ENCODE measurements at regions of chr6 and their contacts with region 1.

Region 1: DNA sequence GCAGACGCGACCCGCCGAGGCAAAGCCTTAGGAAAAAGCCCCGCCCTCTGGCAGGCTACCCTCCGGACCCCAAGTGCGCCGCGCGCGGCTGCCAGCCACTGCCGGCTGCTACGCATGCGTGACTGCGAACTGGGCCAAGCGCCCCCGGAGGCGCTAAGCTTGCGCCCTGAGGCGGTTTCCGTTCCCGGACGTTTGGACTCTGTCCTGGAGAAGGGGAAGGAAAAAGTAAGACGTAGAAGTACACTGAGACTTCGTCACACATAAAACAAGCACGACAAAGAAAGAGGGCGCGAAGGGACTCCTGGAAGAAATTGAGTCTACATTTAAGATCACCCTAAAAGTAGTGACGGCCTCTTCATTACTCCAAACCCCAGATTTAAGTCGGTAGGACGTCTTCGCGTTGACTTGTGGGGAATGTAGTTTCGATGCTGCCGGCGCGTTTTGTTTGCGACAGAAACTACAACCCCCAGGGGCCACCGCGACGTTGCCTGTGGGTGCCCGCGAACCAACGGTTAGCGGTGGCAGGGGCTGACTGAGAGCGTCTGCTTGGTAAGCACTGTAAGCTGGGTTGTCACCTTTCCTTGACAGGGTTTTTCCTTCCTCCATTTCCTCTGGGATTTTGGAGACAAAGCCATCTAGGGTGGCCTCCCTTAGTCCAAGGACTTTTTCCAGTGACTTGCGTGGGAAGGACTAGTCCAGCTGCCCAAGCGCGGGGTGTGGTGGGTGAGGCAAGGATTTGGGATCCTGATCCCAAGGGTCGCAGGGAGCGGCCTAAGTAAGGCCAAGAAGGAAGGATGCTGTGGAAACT is at the start of gene CEP57L1:
- DNase-seq: peak; percentile 97
- H3K4me3 Mint-ChIP-seq: peak within 1 kb of the TSS; percentile 94
- H3K27ac Mint-ChIP-seq: peak within 1 kb of the TSS; percentile 100
- H3K4me1 Mint-ChIP-seq: peaks cover 49% of the 10 kb centered on the region
- H3K27me3 Mint-ChIP-seq: no peaks in the 10 kb centered on the region
- total RNA-seq, gene CEP57L1: 21.6 to 23.3 TPM

Region 2: DNA sequence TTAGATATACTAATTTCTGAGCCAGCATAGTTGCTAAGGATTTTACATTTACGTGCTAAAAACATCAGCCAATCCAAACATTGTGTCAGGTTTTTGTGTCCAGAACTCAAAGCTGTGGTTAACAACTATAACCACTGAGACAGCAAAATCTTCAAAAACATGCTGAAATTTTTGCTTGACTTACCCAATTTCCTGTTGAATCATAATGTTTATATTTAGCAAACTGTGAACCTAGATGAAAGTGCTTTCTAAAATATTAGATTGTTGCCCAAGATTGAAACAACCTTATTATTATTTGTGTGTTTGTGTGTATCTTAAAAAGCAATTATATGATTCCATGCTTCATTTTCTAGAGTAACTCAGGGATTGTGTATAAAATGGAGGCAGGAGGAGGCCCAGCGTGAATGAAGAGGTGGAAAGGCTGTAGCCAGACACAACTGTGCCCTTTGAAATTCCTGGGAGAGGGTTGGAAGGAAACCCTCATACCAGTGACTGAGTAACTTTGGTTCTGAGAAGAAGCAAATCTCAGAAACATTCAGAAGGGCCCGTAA is 199.0 kb before region 1 on chr6:
- CTCF ChIA-PET with region 1: no interaction called
- POLR2A ChIA-PET with region 1: interaction called, 10 read pairs
- DNase-seq: no peak
- H3K4me3 Mint-ChIP-seq: peak overlapping the region; percentile 45
- H3K27ac Mint-ChIP-seq: peak overlapping the region; percentile 93
- H3K4me1 Mint-ChIP-seq: peaks cover 53% of the 10 kb centered on the region
- H3K27me3 Mint-ChIP-seq: peaks cover 1% of the 10 kb centered on the region

Region 3: GRCh38 chr6:108921547-108922361 is 173.5 kb before region 1 on chr6:
- CTCF ChIA-PET with region 1: interaction called, 4 read pairs
- POLR2A ChIA-PET with region 1: interaction called, 18 read pairs
- DNase-seq: peak; percentile 63
- H3K4me3 Mint-ChIP-seq: no peak overlapping the region
- H3K27ac Mint-ChIP-seq: peak overlapping the region; percentile 78
- H3K4me1 Mint-ChIP-seq: peaks cover 49% of the 10 kb centered on the region
- H3K27me3 Mint-ChIP-seq: peaks cover 67% of the 10 kb centered on the region

Region 4: GRCh38 chr6:109073344-109074132 is 21.7 kb before region 1 on chr6:
- CTCF ChIA-PET with region 1: interaction called, 11 read pairs
- POLR2A ChIA-PET with region 1: interaction called, 22 read pairs
- DNase-seq: peak; percentile 47
- H3K4me3 Mint-ChIP-seq: no peak overlapping the region
- H3K27ac Mint-ChIP-seq: no peak overlapping the region
- H3K4me1 Mint-ChIP-seq: peaks cover 21% of the 10 kb centered on the region
- H3K27me3 Mint-ChIP-seq: no peaks in the 10 kb centered on the region

Region 5: GRCh38 chr6:109373762-109374161 is 278.5 kb after region 1 on chr6:
- CTCF ChIA-PET with region 1: interaction called, 4 read pairs
- POLR2A ChIA-PET with region 1: interaction called, 25 read pairs
- DNase-seq: peak; percentile 64
- H3K4me3 Mint-ChIP-seq: peak overlapping the region; percentile 54
- H3K27ac Mint-ChIP-seq: peak overlapping the region; percentile 89
- H3K4me1 Mint-ChIP-seq: peaks cover 78% of the 10 kb centered on the region
- H3K27me3 Mint-ChIP-seq: no peaks in the 10 kb centered on the region

Region 6: DNA sequence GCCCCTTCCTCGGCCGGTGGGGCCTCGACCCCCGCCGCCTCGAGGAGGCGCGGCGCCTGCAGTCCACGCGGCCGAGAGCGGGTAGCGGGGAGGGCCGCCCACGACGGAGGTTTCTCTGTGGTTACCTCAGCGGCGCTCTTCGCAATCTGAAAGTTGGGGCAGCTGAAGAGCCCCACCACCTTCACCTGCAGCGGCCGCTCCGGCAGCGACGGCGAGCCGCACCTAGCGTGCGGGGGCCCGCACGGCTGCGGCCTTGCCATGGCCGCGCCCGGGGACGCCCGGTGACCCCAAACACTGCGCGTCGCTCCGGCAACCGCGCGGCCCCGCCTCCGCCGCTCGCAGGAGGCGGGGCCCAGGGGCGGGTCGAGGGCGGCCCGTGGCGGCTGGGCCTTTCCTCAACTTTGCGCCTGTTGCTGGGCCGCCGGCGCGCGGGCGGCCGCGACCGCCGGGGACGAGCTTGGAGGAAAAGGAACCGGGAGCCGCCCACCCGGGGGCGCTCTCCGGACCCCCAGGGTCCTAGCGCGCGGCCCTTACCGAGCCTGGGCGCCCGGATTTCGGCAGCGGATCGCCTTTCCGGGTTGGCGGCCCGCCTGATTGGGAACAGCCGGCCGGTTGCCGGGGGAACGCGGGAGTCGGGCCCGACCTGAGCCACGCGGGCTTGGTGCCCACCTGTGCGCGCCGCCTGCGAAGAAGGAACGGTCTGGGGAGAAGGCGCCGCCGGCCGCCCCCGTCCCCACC is 345.3 kb after region 1 on chr6 and contains the starts of genes PPIL6 and SMPD2:
- CTCF ChIA-PET with region 1: no interaction called
- POLR2A ChIA-PET with region 1: interaction called, 12 read pairs
- DNase-seq: peak; percentile 81
- H3K4me3 Mint-ChIP-seq: peak within 1 kb of the TSS; percentile 90
- H3K27ac Mint-ChIP-seq: peak within 1 kb of the TSS; percentile 75
- H3K4me1 Mint-ChIP-seq: peaks cover 32% of the 10 kb centered on the region
- H3K27me3 Mint-ChIP-seq: peaks cover 4% of the 10 kb centered on the region
- total RNA-seq, gene PPIL6: not detected
- total RNA-seq, gene SMPD2: 15.9 to 16.9 TPM

Measured in activated CD4-positive, alpha-beta memory T cell treated with anti-CD3 and anti-CD28 coated beads, Interleukin-2, amount 10 ng/mL, durations not matched to agents 7 days and 5 days (primary cell).